CD4-positive, alpha-beta memory T cell (primary cell): ENCODE measurements at regions of chr5 and their contacts with region 1.

Region 1: GRCh38 chr5:16616536-16617273 is at the start of gene RETREG1:
- DNase-seq: peak; percentile 84 to 89 (median 88)
- H3K4me3 ChIP-seq: peak within 1 kb of the TSS; percentile 53 to 66
- H3K4me3 Mint-ChIP-seq: peak within 1 kb of the TSS in 7 of 8 donors; percentile 91 to 99 (median 96)
- H3K27ac ChIP-seq: peak within 1 kb of the TSS; percentile 91
- H3K27ac Mint-ChIP-seq: peak within 1 kb of the TSS in 6 of 7 donors; percentile 89 to 97 (median 96)
- H3K4me1 ChIP-seq: peaks cover 53% of the 10 kb centered on the region
- H3K4me1 Mint-ChIP-seq: peaks cover 26 to 39% (median 34%) of the 10 kb centered on the region in 4 donors
- H3K27me3 ChIP-seq: no peaks in the 10 kb centered on the region
- H3K27me3 Mint-ChIP-seq: no peaks in the 10 kb centered on the region
- total RNA-seq, gene RETREG1: 26.6 to 28.0 TPM

Region 2: GRCh38 chr5:16465544-16466466 is 150.9 kb before region 1 on chr5 and contains the start of gene ZNF622:
- CTCF ChIA-PET with region 1: no interaction called
- POLR2A ChIA-PET with region 1: no interaction called
- intact Hi-C with region 1: loop called (anchors 1 kb)
- DNase-seq: peak; percentile 84 to 90 (median 87)
- H3K4me3 ChIP-seq: peak within 1 kb of the TSS; percentile 85 to 96
- H3K4me3 Mint-ChIP-seq: peak within 1 kb of the TSS; percentile 93 to 99 (median 97)
- H3K27ac ChIP-seq: peak within 1 kb of the TSS; percentile 90
- H3K27ac Mint-ChIP-seq: peak within 1 kb of the TSS; percentile 94 to 98 (median 97)
- H3K4me1 ChIP-seq: peaks cover 60% of the 10 kb centered on the region
- H3K4me1 Mint-ChIP-seq: peaks cover 65 to 90% (median 77%) of the 10 kb centered on the region in 4 donors
- H3K27me3 ChIP-seq: no peaks in the 10 kb centered on the region
- H3K27me3 Mint-ChIP-seq: no peaks in the 10 kb centered on the region
- total RNA-seq, gene ZNF622: 32.2 to 34.8 TPM

Region 3: GRCh38 chr5:16626663-16627264 is 10.1 kb after region 1 on chr5:
- CTCF ChIA-PET with region 1: interaction called, 10 read pairs
- POLR2A ChIA-PET with region 1: interaction called, 92 read pairs
- intact Hi-C with region 1: loop called (anchors 1 kb)
- DNase-seq: peak in 4 of 5 donors; percentile 14 to 40 (median 34)
- H3K4me3 ChIP-seq: no peak overlapping the region
- H3K4me3 Mint-ChIP-seq: peak overlapping the region in 5 of 8 donors; percentile 24 to 82 (median 37)
- H3K27ac ChIP-seq: no peak overlapping the region
- H3K27ac Mint-ChIP-seq: peak overlapping the region; percentile 30 to 89 (median 68)
- H3K4me1 ChIP-seq: peaks cover 35% of the 10 kb centered on the region
- H3K4me1 Mint-ChIP-seq: peaks cover 24 to 64% (median 30%) of the 10 kb centered on the region in 4 donors
- H3K27me3 ChIP-seq: no peaks in the 10 kb centered on the region
- H3K27me3 Mint-ChIP-seq: no peaks in the 10 kb centered on the region

Region 4: DNA sequence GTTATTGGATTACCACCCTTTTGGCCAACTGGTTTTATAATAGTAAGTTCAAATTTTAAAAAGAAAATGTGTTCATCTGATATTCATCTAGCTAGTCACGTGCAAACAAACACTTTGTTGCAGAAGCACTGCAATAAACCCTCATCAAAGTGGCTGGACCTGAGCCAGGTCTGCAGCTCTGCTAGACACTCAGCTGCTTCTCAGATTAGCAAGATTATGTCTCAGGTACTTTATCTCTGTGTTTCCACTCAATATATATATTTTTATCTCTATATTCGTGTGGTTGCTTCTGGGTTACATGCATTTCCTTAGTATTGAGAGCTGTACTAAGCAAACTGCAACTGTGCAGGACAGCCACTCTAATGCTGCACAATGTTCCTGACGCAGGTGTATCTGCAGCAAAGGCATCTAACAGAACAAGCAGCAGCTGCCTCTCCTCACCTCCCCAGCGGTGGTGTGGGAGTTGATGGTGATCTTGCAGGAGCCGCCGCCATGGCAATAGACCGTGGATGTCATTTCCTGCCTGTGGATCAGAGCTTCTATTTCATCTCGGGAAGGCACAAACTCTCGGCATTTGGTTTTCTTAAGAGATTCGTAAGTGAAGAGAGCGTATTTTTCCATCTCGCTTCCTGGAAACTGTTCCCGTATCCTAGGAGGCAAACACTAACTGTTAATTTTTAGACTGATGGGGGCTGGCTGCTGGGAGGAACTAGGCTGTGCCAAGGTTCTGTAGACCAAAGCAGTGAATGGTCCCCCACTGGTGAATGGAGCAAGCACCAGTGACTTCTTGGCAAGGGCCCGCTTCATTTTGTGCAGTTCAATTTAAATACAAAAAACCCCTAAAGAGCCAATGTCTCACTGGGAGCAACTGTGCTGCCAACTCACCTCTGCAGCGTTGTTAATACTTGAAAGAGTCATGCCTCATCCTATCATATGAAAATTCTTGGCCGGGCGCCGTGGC is 56.8 kb after region 1 on chr5:
- CTCF ChIA-PET with region 1: interaction called, 3 read pairs
- POLR2A ChIA-PET with region 1: interaction called, 13 read pairs
- intact Hi-C with region 1: loop called (anchors 2 kb)
- DNase-seq: peak; percentile 28 to 62 (median 45)
- H3K4me3 ChIP-seq: peak overlapping the region in 1 of 2 donors; percentile 14
- H3K4me3 Mint-ChIP-seq: peak overlapping the region; percentile 21 to 88 (median 74)
- H3K27ac ChIP-seq: no peak overlapping the region
- H3K27ac Mint-ChIP-seq: peak overlapping the region in 6 of 7 donors; percentile 37 to 92 (median 50)
- H3K4me1 ChIP-seq: peaks cover 14% of the 10 kb centered on the region
- H3K4me1 Mint-ChIP-seq: peaks cover 6 to 19% (median 11%) of the 10 kb centered on the region in 4 donors
- H3K27me3 ChIP-seq: no peaks in the 10 kb centered on the region
- H3K27me3 Mint-ChIP-seq: no peaks in the 10 kb centered on the region